CD8-positive, alpha-beta T cell (primary cell): ENCODE measurements at regions of chr22 and their contacts with region 1.

Region 1: DNA sequence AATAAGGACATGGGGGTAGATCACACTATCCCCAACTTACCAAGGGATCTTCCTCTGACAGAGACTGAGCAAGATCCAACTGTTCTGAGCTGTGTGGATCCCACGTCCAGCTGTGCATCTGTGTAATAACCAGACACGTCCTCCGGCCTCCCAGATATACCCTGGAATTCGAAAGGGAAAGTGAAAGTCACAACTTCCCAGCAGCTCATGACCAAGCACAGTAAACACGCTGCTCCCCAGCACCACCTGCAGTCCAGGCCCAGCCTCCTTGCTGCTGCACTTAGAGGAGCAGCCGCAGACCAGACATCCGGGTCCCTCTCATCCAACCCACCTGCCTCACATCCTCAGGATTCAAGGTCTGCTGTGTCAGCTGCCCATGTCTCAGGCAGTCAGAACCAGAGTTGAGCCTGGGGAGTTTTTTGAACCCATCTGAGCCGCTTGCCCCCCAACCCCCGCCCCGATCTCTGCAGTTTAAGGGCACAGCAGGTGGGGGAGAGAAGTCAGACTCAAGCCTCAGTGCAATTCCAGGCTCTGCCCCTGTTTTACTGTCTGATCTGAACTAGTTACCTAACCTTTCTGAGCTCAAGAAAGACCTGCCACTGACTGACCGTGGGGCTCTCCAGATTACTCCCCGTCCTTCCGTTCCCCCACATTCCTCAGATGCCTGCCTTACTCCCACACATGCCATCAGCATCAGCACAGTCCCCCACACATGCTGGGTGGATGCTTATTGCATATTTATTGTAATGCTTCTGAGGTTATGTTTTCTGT is at the start of gene APOL2:
- DNase-seq: peak; percentile 59 to 94 (median 87)
- ATAC-seq: peak; percentile 97
- H3K4me3 ChIP-seq: peak within 1 kb of the TSS; percentile 81 to 89
- H3K4me3 Mint-ChIP-seq: peak within 1 kb of the TSS; percentile 95
- H3K27ac ChIP-seq: peak within 1 kb of the TSS; percentile 69 to 92
- H3K27ac Mint-ChIP-seq: peak within 1 kb of the TSS; percentile 96
- H3K4me1 ChIP-seq: peaks cover 38% of the 10 kb centered on the region
- H3K4me1 Mint-ChIP-seq: peaks cover 50% of the 10 kb centered on the region
- H3K27me3 ChIP-seq: no peaks in the 10 kb centered on the region
- H3K27me3 Mint-ChIP-seq: no peaks in the 10 kb centered on the region
- CTCF ChIP-seq: peak; percentile 69
- total RNA-seq, gene APOL2: 17.4 to 18.2 TPM

Region 2: DNA sequence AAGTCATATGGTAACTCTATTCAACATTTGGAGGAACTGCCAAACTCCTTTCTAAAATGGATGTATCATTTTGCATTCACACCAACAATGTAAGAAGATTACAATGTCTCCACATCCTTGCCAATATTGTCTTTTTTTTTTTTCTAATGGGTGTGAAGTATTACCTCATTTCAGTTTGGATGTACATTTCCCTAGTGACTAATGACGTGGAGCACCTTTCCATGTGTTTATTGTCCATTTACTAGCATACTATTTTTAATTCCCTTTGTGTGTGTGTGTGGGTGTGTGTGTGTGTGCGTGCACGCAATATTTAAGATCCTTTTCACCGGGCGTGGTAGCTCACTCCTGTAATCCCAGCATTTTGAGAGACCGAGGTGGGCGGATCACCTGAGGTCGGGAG is 141.7 kb before region 1 on chr22:
- CTCF ChIA-PET with region 1: no interaction called
- POLR2A ChIA-PET with region 1: no interaction called
- intact Hi-C with region 1: no loop called
- DNase-seq: no peak
- ATAC-seq: no peak
- H3K4me3 ChIP-seq: no peak overlapping the region
- H3K4me3 Mint-ChIP-seq: no peak overlapping the region
- H3K27ac ChIP-seq: no peak overlapping the region
- H3K27ac Mint-ChIP-seq: no peak overlapping the region
- H3K4me1 ChIP-seq: no peaks in the 10 kb centered on the region
- H3K4me1 Mint-ChIP-seq: no peaks in the 10 kb centered on the region
- H3K27me3 ChIP-seq: peaks cover 0 to 2% of the 10 kb centered on the region in 2 experiments
- H3K27me3 Mint-ChIP-seq: peaks cover 10% of the 10 kb centered on the region
- CTCF ChIP-seq: no peak

Region 3: DNA sequence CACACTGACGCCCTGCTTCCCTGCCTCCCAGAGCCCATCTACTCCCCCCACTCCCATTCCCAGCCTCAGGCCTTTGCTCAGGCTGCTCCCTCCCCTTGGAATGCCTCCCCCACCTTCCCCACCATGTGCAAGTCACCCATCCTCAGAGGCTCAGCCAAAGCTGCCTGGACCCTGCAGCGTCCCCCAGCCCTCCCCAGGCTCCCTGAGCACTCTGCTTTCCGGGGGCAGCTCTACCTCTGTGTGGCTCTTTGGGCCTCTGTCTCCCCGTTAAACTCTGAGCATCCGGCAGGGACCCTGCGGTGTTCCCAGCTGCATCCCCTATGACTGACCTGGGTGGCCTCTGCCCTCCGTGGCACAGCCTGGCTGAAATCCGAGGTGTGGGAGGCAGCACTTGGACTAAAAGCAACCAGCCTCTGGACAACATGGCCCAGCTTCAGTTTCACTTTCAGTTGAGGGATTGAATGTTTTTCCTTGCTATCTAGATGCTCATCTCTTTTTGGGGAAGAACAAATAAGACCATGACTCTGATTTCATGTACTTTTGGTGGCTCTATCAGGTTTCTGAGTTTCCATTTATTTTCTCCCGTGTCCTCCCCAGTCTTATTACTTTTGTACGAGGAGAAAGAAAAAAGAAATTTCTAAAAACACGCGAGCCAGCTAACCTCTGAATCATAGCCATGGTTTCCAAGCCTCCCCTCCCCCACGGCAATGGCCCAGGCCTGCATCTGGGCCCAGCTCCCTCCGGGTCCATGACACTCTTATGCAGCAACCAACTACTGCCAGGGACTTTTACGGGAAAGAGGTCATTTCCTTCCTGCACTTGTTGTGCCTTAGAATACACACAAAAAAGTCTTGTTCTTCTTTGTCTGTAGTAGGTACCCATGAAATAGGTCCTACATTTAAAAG is 82.8 kb before region 1 on chr22:
- CTCF ChIA-PET with region 1: interaction called, 7 read pairs
- POLR2A ChIA-PET with region 1: no interaction called
- intact Hi-C with region 1: loop called in 1 of 2 experiments (anchors 5 kb)
- DNase-seq: peak; percentile 36 to 90 (median 80)
- ATAC-seq: peak; percentile 46
- H3K4me3 ChIP-seq: peak overlapping the region; percentile 86 to 91
- H3K4me3 Mint-ChIP-seq: peak overlapping the region; percentile 97
- H3K27ac ChIP-seq: peak overlapping the region; percentile 77 to 96
- H3K27ac Mint-ChIP-seq: peak overlapping the region; percentile 99
- H3K4me1 ChIP-seq: peaks cover 62% of the 10 kb centered on the region
- H3K4me1 Mint-ChIP-seq: peaks cover 90% of the 10 kb centered on the region
- H3K27me3 ChIP-seq: no peaks in the 10 kb centered on the region
- H3K27me3 Mint-ChIP-seq: no peaks in the 10 kb centered on the region
- CTCF ChIP-seq: no peak

Region 4: GRCh38 chr22:36227386-36227785 is 12.2 kb before region 1 on chr22:
- CTCF ChIA-PET with region 1: interaction called, 17 read pairs
- POLR2A ChIA-PET with region 1: no interaction called
- intact Hi-C with region 1: no loop called
- DNase-seq: no peak
- ATAC-seq: no peak
- H3K4me3 ChIP-seq: no peak overlapping the region
- H3K4me3 Mint-ChIP-seq: no peak overlapping the region
- H3K27ac ChIP-seq: no peak overlapping the region
- H3K27ac Mint-ChIP-seq: no peak overlapping the region
- H3K4me1 ChIP-seq: no peaks in the 10 kb centered on the region
- H3K4me1 Mint-ChIP-seq: peaks cover 2% of the 10 kb centered on the region
- H3K27me3 ChIP-seq: no peaks in the 10 kb centered on the region
- H3K27me3 Mint-ChIP-seq: no peaks in the 10 kb centered on the region
- CTCF ChIP-seq: no peak

Region 5: DNA sequence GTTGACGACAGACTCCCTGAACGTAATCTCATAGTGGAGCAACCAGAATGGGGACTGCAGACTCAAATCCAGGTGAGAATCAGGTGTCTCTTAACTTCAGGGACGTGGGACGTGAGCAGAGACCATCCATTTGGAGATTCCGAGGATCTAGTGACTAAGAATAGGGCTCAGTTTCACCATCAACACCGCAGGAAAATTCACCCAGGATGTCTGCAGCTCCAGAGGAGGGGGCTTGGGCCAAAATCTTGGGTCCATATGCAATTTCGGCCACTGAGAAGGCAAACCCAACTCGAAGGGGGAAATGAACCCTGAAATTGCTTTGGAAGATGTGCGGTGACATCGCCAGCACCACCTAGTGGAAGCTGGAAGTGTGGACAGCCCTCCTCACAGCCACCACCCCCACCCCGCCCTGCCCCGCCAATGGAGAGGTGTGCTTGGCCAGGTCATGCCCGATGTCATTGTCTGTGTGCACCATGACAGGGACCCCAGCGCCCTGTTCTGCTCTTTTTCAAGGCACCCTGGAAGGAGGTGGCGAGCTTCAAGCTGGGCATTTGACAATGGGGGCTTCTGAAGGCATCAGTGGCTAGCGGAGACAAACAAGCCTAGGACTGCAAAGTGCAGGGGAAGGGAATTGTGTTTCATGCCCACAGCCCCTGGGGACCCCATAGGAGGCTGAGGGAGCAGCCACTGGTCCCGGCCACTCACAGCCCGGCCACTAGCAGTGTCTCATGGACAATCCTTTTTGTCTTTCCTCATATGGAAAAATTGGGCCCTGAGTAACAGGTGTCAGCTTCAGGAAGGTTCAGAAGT is 38.1 kb after region 1 on chr22:
- CTCF ChIA-PET with region 1: interaction called, 8 read pairs
- POLR2A ChIA-PET with region 1: interaction called, 10 read pairs
- intact Hi-C with region 1: loop called in 1 of 2 experiments (anchors 1 kb)
- DNase-seq: peak; percentile 44 to 84 (median 64)
- ATAC-seq: peak; percentile 85
- H3K4me3 ChIP-seq: no peak overlapping the region
- H3K4me3 Mint-ChIP-seq: peak overlapping the region; percentile 11
- H3K27ac ChIP-seq: peak overlapping the region in 1 of 2 experiments; percentile 30
- H3K27ac Mint-ChIP-seq: peak overlapping the region; percentile 50
- H3K4me1 ChIP-seq: peaks cover 21% of the 10 kb centered on the region
- H3K4me1 Mint-ChIP-seq: peaks cover 18% of the 10 kb centered on the region
- H3K27me3 ChIP-seq: no peaks in the 10 kb centered on the region
- H3K27me3 Mint-ChIP-seq: no peaks in the 10 kb centered on the region
- CTCF ChIP-seq: peak; percentile 73

Region 6: DNA sequence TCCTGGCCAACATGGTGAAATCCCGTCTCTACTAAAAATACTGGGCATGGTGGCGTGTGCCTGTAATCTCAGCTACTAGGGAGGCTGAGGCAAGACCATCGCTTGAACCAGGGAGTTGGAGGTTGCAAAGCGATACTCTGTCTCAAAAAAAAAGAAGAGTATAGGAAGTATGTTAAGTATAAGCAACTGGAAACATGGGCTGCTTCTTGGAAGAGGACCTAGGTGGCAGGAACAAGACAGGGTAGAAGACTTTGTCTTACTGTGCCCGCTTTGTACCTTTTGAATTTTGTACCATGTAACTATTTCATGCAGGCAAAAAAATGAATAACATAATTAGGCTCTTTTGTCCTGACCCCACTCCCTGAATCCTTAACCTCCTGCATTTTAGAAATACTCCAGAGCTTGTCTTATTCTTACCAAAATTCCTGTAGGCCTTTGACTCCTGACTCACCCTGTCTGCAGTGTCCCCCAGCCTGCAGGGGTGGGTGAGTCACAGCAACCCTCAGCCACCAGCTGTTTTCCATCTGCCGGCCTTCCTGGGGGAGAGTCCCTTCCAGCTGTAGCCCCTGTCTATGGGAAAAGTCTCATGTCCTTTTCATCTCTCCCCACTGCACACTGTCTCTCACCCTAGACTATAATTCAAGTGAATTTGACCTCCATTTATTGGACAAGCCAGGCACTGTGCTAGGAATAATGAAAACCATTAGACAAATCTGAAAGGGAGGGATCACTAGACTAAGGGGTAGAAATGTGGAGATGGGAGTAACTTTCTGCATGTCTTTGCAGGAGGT is 200.1 kb after region 1 on chr22:
- CTCF ChIA-PET with region 1: no interaction called
- POLR2A ChIA-PET with region 1: interaction called, 10 read pairs
- intact Hi-C with region 1: no loop called
- DNase-seq: no peak
- ATAC-seq: no peak
- H3K4me3 ChIP-seq: no peak overlapping the region
- H3K4me3 Mint-ChIP-seq: no peak overlapping the region
- H3K27ac ChIP-seq: no peak overlapping the region
- H3K27ac Mint-ChIP-seq: no peak overlapping the region
- H3K4me1 ChIP-seq: peaks cover 40% of the 10 kb centered on the region
- H3K4me1 Mint-ChIP-seq: peaks cover 35% of the 10 kb centered on the region
- H3K27me3 ChIP-seq: no peaks in the 10 kb centered on the region
- H3K27me3 Mint-ChIP-seq: no peaks in the 10 kb centered on the region
- CTCF ChIP-seq: no peak